ENCODE measurements at regions of chr19 and their contacts with region 1.

Region 1: GRCh38 chr19:30227661-30228428 is 144.3 kb upstream of the ZNF536 start:
- DNase-seq: peak; percentile 58 to 70 (median 63)
- ATAC-seq: peak; percentile 74 to 94 (median 88)
- H3K4me3 ChIP-seq: peak overlapping the region; percentile 41 to 57 (median 43)
- H3K27ac ChIP-seq: no peak overlapping the region
- H3K4me1 ChIP-seq: peaks cover 0 to 32% (median 4%) of the 10 kb centered on the region in 4 donors
- H3K27me3 ChIP-seq: peaks cover 0 to 10% of the 10 kb centered on the region in 2 donors
- CTCF ChIP-seq: peak; percentile 50 to 64 (median 52)
- POLR2A ChIP-seq: no peak

Region 2: DNA sequence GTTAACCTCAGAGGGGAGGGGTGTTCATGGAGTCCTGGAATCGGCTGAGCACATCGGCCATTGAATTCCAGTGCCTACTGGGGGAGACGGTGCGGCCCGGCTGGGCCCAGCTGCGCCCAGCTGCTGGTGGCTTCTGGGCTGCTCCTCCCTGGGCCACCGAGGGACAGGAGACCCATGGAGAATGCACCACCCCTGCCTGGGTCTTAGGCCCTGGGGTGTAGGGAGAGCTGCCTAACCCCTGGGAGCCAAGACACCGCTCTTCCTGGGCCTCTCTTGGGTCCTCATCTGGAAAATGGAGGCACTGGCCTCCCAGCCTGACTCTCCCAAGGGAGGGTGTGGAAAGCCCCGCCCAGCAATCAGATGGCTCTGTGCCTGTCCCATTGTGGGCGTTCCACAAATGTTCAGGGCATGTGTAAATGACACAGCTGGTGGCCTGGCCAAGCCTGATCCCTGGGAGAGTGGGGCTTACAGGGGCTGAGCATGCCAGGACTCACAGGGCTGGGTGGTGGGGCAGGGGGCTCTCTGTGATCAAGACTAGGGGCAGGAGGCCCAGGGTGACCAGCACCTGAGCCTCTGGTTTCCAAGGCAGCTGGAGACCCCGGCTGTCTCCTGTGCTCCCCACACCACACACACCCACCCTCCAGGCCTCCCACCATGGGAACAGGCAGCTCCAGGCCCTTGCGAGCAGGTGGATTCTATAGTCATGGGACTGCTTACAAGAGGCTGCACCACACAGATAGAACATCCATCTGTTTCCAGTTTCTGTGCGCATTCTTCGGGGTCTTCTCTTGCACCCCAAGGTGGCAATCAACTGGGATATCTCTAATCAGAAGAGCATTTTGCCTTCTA is 134.9 kb before region 1 on chr19:
- intact Hi-C with region 1: no loop called
- DNase-seq: no peak
- ATAC-seq: no peak
- H3K4me3 ChIP-seq: no peak overlapping the region
- H3K27ac ChIP-seq: no peak overlapping the region
- H3K4me1 ChIP-seq: no peaks in the 10 kb centered on the region
- H3K27me3 ChIP-seq: no peaks in the 10 kb centered on the region
- CTCF ChIP-seq: no peak
- POLR2A ChIP-seq: no peak

Region 3: DNA sequence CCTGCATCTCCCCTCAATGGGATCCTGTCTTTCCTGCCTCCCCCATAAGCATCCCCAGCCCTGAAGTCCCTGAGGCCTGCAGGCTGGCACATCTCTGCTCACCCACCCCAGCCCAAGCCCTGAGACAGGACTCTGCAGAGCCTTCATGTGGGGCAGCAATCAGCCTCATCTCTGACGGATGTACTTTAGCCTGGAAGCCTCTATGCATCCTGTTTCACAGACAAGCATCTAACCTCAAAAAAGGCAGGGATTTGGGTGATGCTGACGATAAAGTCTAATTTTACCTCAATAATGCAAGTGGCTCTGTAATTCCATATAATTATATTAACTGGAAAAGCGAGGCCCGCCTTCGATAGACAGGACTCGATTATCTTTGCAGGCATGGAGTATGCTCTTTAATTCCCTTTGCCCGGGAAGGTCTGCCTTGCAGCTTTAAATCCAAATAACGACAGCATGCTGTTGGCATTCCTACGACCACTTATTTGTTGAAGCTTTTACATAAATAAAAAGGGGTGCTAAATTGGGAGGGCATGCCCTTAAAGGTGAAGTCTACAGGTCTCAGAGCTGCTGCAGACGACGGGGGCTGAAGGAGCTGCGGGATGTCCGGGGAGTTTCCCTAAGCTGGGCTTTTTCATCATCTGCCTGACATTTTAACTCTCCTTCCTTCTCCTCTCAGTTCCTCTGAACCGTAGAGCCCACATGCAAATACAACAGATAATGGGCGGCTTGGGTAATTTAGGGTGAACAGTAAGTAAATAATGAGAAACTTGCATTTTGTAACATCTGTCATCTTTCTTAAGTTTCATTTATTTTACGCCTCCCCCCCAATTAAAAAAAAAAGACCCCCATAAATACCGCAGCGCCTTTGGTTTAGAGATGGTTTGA is 74.3 kb before region 1 on chr19:
- intact Hi-C with region 1: no loop called
- DNase-seq: no peak
- ATAC-seq: no peak
- H3K4me3 ChIP-seq: no peak overlapping the region
- H3K27ac ChIP-seq: no peak overlapping the region
- H3K4me1 ChIP-seq: no peaks in the 10 kb centered on the region
- H3K27me3 ChIP-seq: no peaks in the 10 kb centered on the region
- CTCF ChIP-seq: no peak
- POLR2A ChIP-seq: no peak

Region 4: DNA sequence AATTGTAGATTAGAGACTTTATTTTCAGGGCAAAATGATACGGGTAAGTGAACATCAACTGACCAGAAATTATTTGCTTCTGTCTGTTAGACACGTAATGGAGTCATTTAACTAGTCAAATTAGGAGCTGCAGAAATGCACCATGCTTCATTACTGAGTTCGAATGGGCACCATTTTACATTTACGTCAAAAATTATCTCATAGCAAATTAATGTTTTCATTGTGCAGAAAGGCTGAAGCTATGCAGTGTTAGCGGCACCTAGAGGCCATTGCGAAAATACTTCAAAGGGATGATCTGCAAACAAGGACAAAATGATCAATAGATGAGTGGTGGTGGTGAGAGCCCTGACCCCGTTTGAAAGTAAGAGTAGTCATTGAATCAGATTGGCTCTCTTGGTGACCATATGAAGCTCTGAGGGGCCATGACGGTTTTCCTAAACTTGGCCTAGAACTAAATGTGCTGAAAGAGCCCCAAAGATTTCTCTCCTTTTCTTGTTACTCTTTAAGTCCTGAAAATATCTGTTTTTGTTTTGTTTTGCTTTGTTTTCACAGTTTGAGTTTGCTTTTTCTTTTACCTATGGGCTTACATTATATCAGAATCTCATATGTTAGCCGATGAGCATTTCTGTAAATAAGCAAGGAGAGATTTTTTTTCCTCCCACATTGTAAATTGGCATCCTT is 422.2 kb after region 1 on chr19:
- intact Hi-C with region 1: loop called in 1 of 2 experiments (anchors 10 kb)
- DNase-seq: no peak
- ATAC-seq: peak; percentile 71 to 85 (median 78)
- H3K4me3 ChIP-seq: no peak overlapping the region
- H3K27ac ChIP-seq: no peak overlapping the region
- H3K4me1 ChIP-seq: peaks cover 0 to 1% (median 0%) of the 10 kb centered on the region in 4 donors
- H3K27me3 ChIP-seq: no peaks in the 10 kb centered on the region
- CTCF ChIP-seq: peak; percentile 64 to 82 (median 80)
- POLR2A ChIP-seq: no peak

Measured in right lobe of liver (tissue), 6 donors.